ENCODE measurements at regions of chr20 and their contacts with region 1.

Region 1: DNA sequence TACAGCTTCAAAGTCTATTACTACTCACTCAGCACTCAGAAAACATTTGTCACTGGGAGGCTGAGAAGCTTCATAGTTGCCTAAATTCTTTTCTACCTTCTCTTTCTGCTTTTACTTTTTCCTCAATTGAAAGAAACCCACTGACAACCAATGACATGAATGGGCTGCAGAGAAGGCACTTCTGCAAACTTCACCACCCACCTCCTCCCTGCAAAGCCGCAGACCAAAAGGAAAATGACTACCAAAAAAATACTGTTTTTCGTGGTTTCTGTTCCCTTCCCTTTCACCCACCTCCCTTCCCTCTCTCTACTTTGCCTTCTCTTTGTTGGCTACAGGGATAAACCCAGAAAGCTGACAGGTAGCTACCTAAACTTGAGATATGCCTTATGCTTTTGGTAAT is 3.2 kb downstream of the GNAS-AS1 start:
- DNase-seq: no peak
- H3K4me3 ChIP-seq: no peak overlapping the region
- H3K27ac ChIP-seq: no peak overlapping the region
- H3K4me1 ChIP-seq: no peaks in the 10 kb centered on the region
- H3K27me3 ChIP-seq: no peaks in the 10 kb centered on the region
- CTCF ChIP-seq: no peak
- POLR2A ChIP-seq: no peak

Region 2: DNA sequence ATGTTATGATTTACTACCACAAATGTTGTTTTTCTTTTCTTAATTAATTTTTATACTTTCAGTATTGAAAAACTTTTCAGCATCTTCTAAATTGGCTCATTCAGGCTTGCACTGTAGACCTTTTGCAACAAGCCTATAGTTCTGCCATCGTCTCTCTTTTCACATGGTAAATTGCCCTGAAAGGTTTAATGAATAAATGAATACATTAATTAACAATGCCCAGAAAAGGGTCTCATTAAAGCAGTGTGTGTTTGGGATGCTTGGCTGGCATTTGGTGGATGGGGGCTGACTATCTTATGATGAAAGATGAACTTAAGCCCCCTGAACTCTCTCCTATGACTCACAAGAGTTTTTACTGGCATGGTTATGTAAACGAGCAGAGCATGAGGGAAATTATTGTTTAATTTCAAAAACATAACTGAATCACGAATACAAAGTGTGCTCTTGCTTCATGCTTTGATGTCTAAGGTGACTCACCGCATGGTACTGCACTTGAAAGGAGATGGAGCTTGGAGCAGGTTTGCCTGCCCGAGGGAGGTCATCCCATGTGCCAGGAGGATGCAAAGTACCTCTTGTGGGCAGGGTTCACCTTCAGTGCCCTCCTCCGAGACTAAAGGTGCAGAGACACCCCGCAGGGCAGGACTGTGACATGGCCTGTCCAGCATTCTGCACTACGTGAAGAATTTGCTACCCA is 1300.4 kb before region 1 on chr20:
- intact Hi-C with region 1: loop called (anchors 5 kb)
- DNase-seq: no peak
- H3K4me3 ChIP-seq: no peak overlapping the region
- H3K27ac ChIP-seq: no peak overlapping the region
- H3K4me1 ChIP-seq: no peaks in the 10 kb centered on the region
- H3K27me3 ChIP-seq: peaks cover 0 to 4% of the 10 kb centered on the region in 2 donors
- CTCF ChIP-seq: no peak
- POLR2A ChIP-seq: no peak

Region 3: DNA sequence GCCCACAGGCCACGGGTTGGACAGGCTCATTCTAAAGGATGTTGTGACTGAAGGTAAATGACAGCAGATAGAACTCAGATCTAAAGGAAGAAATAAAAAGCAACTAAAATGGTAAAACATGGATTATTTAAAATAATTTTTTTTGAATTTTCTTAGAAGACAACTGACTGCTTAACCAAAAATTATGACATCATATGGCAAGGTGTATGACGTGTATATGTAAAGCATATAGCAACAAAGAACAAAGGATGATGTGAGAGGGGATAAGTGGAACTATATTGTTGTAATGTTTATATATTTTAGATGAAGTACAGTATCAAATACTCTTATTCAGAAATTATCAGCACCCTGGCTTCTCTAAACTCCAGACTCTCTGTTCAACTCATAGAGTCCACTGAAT is 116.3 kb before region 1 on chr20:
- intact Hi-C with region 1: no loop called
- DNase-seq: no peak
- H3K4me3 ChIP-seq: no peak overlapping the region
- H3K27ac ChIP-seq: no peak overlapping the region
- H3K4me1 ChIP-seq: no peaks in the 10 kb centered on the region
- H3K27me3 ChIP-seq: no peaks in the 10 kb centered on the region
- CTCF ChIP-seq: no peak
- POLR2A ChIP-seq: no peak

Measured in breast epithelium (tissue), 4 donors.